PC-3 (cell line): ENCODE measurements at regions of chr6 and their contacts with region 1.

Region 1: GRCh38 chr6:15691250-15691869 is 28.5 kb upstream of the DTNBP1 start:
- DNase-seq: peak; percentile 92
- ATAC-seq: peak; percentile 99
- H3K4me3 ChIP-seq: peak overlapping the region; percentile 67
- H3K27ac ChIP-seq: no peak overlapping the region
- H3K4me1 ChIP-seq: peaks cover 9% of the 10 kb centered on the region
- H3K27me3 ChIP-seq: no peaks in the 10 kb centered on the region
- CTCF ChIP-seq: peak; percentile 99

Region 2: GRCh38 chr6:15441215-15441868 is 250.0 kb before region 1 on chr6:
- CTCF ChIA-PET with region 1: no interaction called
- POLR2A ChIA-PET with region 1: no interaction called
- intact Hi-C with region 1: no loop called
- DNase-seq: peak; percentile 83
- ATAC-seq: peak; percentile 65
- H3K4me3 ChIP-seq: no peak overlapping the region
- H3K27ac ChIP-seq: no peak overlapping the region
- H3K4me1 ChIP-seq: peaks cover 21% of the 10 kb centered on the region
- H3K27me3 ChIP-seq: no peaks in the 10 kb centered on the region
- CTCF ChIP-seq: peak; percentile 86

Region 3: GRCh38 chr6:15893556-15894268 is 202.4 kb after region 1 on chr6:
- CTCF ChIA-PET with region 1: interaction called, 6 read pairs
- POLR2A ChIA-PET with region 1: no interaction called
- intact Hi-C with region 1: loop called (anchors 5 kb)
- DNase-seq: peak; percentile 86
- ATAC-seq: peak; percentile 62
- H3K4me3 ChIP-seq: no peak overlapping the region
- H3K27ac ChIP-seq: no peak overlapping the region
- H3K4me1 ChIP-seq: 0 out of 2 replicates have a peak, but pooled peaks cover 4% of the 10 kb centered on the region
- H3K27me3 ChIP-seq: no peaks in the 10 kb centered on the region
- CTCF ChIP-seq: peak; percentile 79

Region 4: DNA sequence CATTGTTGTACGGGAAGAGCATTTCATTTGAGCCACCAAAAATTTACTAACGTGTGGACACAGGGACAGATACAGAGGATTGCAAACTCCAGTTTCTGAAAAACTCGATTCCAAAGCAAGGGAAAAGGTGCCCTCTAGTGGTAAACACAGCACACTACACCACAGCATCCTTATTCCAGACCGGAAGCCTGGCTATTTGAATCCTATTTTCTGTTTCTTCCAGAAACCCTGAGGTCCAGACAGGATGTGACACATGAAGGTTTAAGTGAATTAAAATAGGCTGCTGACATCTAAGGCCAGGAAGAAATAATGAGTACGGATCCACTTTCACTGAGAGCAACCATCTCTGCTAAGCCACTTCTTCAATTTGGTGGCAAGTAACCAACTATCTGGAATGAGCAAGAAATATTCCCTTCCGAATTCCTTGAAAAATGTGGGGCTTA is 515.3 kb after region 1 on chr6:
- CTCF ChIA-PET with region 1: interaction called, 5 read pairs
- POLR2A ChIA-PET with region 1: no interaction called
- intact Hi-C with region 1: loop called (anchors 1 kb)
- DNase-seq: peak; percentile 87
- ATAC-seq: peak; percentile 73
- H3K4me3 ChIP-seq: no peak overlapping the region
- H3K27ac ChIP-seq: no peak overlapping the region
- H3K4me1 ChIP-seq: 0 out of 2 replicates have a peak, but pooled peaks cover 4% of the 10 kb centered on the region
- H3K27me3 ChIP-seq: no peaks in the 10 kb centered on the region
- CTCF ChIP-seq: peak; percentile 97